ENCODE measurements at regions of chr1 and their contacts with region 1.

Region 1: GRCh38 chr1:35451125-35451528 is 106.1 kb downstream of the KIAA0319L start:
- DNase-seq: peak; percentile 63 to 86 (median 76)
- ATAC-seq: peak; percentile 97
- H3K4me3 ChIP-seq: no peak overlapping the region
- H3K4me3 Mint-ChIP-seq: no peak overlapping the region
- H3K27ac ChIP-seq: peak overlapping the region in 1 of 2 donors; percentile 43
- H3K27ac Mint-ChIP-seq: peak overlapping the region; percentile 47
- H3K4me1 ChIP-seq: peaks cover 19% of the 10 kb centered on the region
- H3K4me1 Mint-ChIP-seq: peaks cover 36% of the 10 kb centered on the region
- H3K27me3 ChIP-seq: no peaks in the 10 kb centered on the region
- H3K27me3 Mint-ChIP-seq: no peaks in the 10 kb centered on the region
- CTCF ChIP-seq: peak; percentile 83

Region 2: DNA sequence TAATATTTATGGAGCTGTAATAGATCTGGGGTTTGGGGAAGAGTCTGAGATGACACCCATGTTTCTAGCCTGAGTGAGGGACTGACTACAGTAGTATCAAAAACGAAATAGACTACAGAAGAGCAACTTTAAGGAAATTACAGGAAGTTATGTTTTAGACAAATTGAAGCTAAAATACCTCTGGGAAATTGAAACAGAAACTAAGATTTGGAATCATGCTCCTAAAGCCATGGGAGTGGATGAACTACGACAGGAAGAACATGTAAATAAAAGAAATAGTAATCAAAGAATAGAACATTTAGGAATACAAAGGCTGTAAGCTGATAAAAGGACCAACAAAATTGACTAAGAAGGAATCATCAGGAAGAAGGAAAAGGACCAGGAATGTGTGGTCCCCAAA is 37.2 kb after region 1 on chr1:
- CTCF ChIA-PET with region 1: interaction called, 12 read pairs
- POLR2A ChIA-PET with region 1: interaction called, 5 read pairs
- intact Hi-C with region 1: no loop called
- DNase-seq: peak in 1 of 14 experiments; percentile 15
- ATAC-seq: no peak
- H3K4me3 ChIP-seq: no peak overlapping the region
- H3K4me3 Mint-ChIP-seq: no peak overlapping the region
- H3K27ac ChIP-seq: no peak overlapping the region
- H3K27ac Mint-ChIP-seq: no peak overlapping the region
- H3K4me1 ChIP-seq: no peaks in the 10 kb centered on the region
- H3K4me1 Mint-ChIP-seq: peaks cover 14% of the 10 kb centered on the region
- H3K27me3 ChIP-seq: no peaks in the 10 kb centered on the region
- H3K27me3 Mint-ChIP-seq: no peaks in the 10 kb centered on the region
- CTCF ChIP-seq: no peak

Region 3: DNA sequence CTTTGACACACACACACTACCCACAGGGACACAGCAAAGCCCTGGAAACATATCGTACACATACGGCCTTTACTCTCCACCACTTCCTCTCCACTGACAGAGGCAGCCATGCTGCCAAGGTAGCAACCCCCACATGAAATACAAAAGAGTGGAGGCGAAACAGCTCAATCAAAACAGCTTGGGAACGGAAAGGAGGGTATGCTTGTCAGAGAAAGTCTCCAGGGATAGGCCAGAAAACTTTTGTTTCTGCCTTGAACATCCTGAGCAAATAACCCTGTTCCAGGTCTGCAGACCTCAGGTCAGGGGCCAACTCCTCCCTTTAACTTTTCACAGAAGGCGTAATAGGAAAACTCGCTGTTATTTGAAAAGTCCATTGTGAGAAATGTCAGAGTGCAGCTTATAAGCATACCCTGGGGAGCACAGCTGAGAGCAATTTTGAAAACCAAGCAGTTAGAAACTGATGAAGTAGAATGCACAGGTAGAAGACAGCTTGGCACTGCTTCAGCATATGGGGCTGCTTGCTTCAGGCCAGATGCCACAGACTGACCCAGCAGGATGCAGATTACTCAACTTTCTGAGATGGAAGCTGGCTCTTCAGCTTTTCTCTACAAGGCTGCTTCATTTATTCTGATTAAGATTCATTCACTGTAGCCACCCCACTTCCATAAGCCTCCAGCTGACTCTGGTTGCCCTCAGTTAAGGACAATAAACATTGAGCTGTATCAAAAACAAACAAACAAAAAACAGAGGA is 88.1 kb after region 1 on chr1:
- CTCF ChIA-PET with region 1: interaction called, 23 read pairs
- POLR2A ChIA-PET with region 1: interaction called, 19 read pairs
- intact Hi-C with region 1: no loop called
- DNase-seq: peak in 11 of 14 experiments; percentile 20 to 83 (median 45)
- ATAC-seq: peak; percentile 91
- H3K4me3 ChIP-seq: peak overlapping the region; percentile 9
- H3K4me3 Mint-ChIP-seq: peak overlapping the region; percentile 87
- H3K27ac ChIP-seq: peak overlapping the region; percentile 59 to 64
- H3K27ac Mint-ChIP-seq: peak overlapping the region; percentile 97
- H3K4me1 ChIP-seq: peaks cover 45% of the 10 kb centered on the region
- H3K4me1 Mint-ChIP-seq: peaks cover 89% of the 10 kb centered on the region
- H3K27me3 ChIP-seq: no peaks in the 10 kb centered on the region
- H3K27me3 Mint-ChIP-seq: no peaks in the 10 kb centered on the region
- CTCF ChIP-seq: no peak

Region 4: GRCh38 chr1:35557292-35558063 is 106.4 kb after region 1 on chr1 and contains the starts of genes KIAA0319L and NCDN:
- CTCF ChIA-PET with region 1: interaction called, 11 read pairs
- POLR2A ChIA-PET with region 1: interaction called, 31 read pairs
- intact Hi-C with region 1: no loop called
- DNase-seq: peak; percentile 90 to 97 (median 94)
- ATAC-seq: peak; percentile 89
- H3K4me3 ChIP-seq: peak within 1 kb of the TSS; percentile 98
- H3K4me3 Mint-ChIP-seq: peak within 1 kb of the TSS; percentile 100
- H3K27ac ChIP-seq: peak within 1 kb of the TSS; percentile 77 to 84
- H3K27ac Mint-ChIP-seq: peak within 1 kb of the TSS; percentile 97
- H3K4me1 ChIP-seq: peaks cover 48% of the 10 kb centered on the region
- H3K4me1 Mint-ChIP-seq: peaks cover 75% of the 10 kb centered on the region
- H3K27me3 ChIP-seq: no peaks in the 10 kb centered on the region
- H3K27me3 Mint-ChIP-seq: no peaks in the 10 kb centered on the region
- CTCF ChIP-seq: no peak
- total RNA-seq, gene KIAA0319L: 50.9 to 53.3 TPM
- total RNA-seq, gene NCDN: 12.8 to 14.2 TPM

Region 5: DNA sequence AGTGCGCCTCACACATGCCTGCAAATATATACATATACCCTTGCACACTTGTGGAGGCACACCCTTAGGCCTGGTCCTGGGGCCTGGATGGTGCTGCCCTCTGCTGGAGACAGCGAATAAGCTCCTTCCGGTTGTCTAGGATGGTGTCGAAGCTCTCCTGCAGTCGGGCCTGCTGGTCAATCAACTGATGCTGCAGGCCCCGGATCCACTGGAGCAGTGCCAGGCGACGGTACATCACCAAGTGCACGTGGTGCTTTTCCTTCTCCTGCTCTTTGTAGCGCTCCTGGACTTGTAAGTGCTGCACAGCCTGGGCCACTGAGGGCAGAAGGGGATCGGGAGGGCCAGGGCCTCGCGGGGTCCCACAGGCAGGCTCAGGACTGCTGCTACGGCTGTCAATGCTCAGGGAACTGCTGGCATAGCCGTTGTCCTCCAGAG is 264.5 kb after region 1 on chr1:
- CTCF ChIA-PET with region 1: interaction called, 13 read pairs
- POLR2A ChIA-PET with region 1: interaction called, 3 read pairs
- intact Hi-C with region 1: loop called in 1 of 2 experiments (anchors 5 kb)
- DNase-seq: peak; percentile 66 to 87 (median 72)
- ATAC-seq: peak; percentile 72
- H3K4me3 ChIP-seq: no peak overlapping the region
- H3K4me3 Mint-ChIP-seq: peak overlapping the region; percentile 70
- H3K27ac ChIP-seq: no peak overlapping the region
- H3K27ac Mint-ChIP-seq: no peak overlapping the region
- H3K4me1 ChIP-seq: peaks cover 38% of the 10 kb centered on the region
- H3K4me1 Mint-ChIP-seq: peaks cover 33% of the 10 kb centered on the region
- H3K27me3 ChIP-seq: no peaks in the 10 kb centered on the region
- H3K27me3 Mint-ChIP-seq: no peaks in the 10 kb centered on the region
- CTCF ChIP-seq: peak; percentile 92

Region 6: DNA sequence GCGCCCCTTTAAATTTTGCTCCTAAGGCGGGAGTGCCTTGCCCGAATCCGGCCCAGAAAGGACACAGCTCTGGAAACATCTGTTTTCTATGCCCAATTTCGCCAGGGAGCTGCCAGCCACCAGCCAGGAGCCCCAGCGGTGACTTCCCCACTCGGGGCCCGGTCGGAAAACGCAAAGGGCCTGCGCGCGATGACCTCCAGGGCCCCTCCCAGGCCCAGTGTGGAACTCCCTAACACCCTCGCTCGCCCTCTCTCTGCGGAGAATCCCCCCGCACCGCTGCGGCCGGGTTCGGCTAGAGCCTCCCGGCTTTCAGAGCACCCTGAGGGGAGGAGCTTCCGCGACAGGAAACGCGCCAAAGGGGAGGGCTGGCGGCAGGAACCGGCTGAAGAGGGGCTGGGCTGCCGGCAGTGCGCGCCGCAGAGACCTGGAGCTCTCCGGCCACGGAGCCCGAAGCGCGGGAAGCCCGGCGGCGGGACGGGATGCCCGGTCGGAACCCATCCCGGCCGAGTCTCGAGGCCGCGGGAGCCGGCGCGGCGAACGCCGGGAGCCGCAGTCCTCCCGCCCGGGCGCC is 318.1 kb after region 1 on chr1:
- CTCF ChIA-PET with region 1: interaction called, 3 read pairs
- POLR2A ChIA-PET with region 1: interaction called, 5 read pairs
- intact Hi-C with region 1: loop called (anchors 2 kb)
- DNase-seq: peak; percentile 60 to 92 (median 75)
- ATAC-seq: peak; percentile 79
- H3K4me3 ChIP-seq: peak overlapping the region; percentile 85
- H3K4me3 Mint-ChIP-seq: peak overlapping the region; percentile 97
- H3K27ac ChIP-seq: peak overlapping the region; percentile 68 to 78
- H3K27ac Mint-ChIP-seq: peak overlapping the region; percentile 72
- H3K4me1 ChIP-seq: peaks cover 13% of the 10 kb centered on the region
- H3K4me1 Mint-ChIP-seq: peaks cover 13% of the 10 kb centered on the region
- H3K27me3 ChIP-seq: no peaks in the 10 kb centered on the region
- H3K27me3 Mint-ChIP-seq: no peaks in the 10 kb centered on the region
- CTCF ChIP-seq: no peak

Measured in CD4-positive, alpha-beta T cell (primary cell).